ENCODE measurements at regions of chr7 and their contacts with region 1.

Region 1: DNA sequence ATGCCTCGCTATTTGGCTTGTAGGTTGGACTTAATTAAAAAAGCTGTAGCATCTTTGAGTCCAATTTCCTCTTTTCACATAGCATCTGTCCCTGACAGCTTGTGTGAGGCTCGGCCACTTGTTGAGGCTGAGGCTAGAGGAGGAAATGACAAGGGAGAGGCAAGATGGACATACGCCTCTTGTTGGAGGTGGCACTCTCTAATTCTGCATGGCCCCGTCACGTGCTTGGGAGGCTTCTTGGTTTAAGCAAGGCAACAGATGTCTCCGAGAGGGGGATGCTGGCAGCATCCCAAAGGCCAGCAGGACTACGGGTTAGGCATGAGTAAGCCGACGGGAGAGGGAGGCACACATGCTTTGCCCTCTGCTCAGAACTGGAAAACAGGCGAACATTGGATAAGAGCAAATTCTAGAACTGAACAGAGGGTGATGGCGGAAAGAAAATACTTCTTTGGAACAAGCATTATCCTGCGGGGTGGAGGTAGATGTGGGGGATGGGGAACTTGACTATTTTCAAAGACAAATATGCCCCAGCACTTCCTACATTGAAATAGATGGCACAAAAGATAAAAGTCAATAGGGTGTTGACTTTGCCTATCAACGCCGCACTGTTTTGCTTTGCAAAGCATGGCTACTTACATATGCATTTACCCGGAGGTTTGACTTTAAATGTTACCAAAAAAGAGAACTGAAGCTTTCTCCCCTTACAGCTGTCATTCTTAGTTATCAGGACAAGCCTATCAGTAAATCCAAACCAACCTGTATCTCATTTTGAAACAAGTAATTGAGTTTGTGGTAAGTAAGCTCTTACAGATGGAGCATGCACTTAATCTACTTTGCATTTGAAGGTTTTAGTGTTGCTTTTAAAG is 94.8 kb downstream of the CHN2 start:
- DNase-seq: peak in 1 of 2 donors; percentile 22
- ATAC-seq: peak in 4 of 8 donors; percentile 33 to 49 (median 38)
- H3K4me3 ChIP-seq: no peak overlapping the region
- H3K27ac ChIP-seq: no peak overlapping the region
- H3K4me1 ChIP-seq: peaks cover 0 to 40% (median 0%) of the 10 kb centered on the region in 9 donors
- H3K27me3 ChIP-seq: no peaks in the 10 kb centered on the region
- CTCF ChIP-seq: no peak

Region 2: DNA sequence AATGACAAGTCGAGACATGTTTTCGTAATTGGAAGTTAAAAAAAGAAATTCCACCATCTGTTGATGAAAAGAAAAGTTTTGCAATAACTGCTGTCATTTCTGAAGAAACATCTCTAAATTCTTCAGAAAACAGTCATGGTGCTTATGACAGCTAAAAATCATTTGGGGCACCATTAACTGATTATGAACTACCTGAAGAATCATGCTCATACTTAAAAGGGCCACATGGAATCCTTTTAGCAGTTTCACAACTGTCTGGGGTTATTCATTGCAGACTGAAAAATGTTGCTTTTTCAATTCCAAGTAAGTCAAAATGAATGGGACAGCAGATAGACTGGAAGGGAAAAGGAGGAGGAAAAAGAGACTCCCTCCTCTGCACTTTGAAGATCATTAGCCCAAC is 39.4 kb after region 1 on chr7:
- intact Hi-C with region 1: loop called in 1 of 10 experiments (anchors 5 kb)
- DNase-seq: no peak
- ATAC-seq: no peak
- H3K4me3 ChIP-seq: no peak overlapping the region
- H3K27ac ChIP-seq: peak overlapping the region in 1 of 10 donors; percentile 48
- H3K4me1 ChIP-seq: peaks cover 0 to 29% (median 4%) of the 10 kb centered on the region in 9 donors
- H3K27me3 ChIP-seq: no peaks in the 10 kb centered on the region
- CTCF ChIP-seq: no peak

Measured in heart right ventricle (tissue), 16 donors.